OCI-LY7 (cell line): ENCODE measurements at regions of chr9 and their contacts with region 1.

Region 1: GRCh38 chr9:33659921-33660320 is 135.4 kb upstream of the PRSS3 start:
- DNase-seq: no peak
- H3K4me3 ChIP-seq: no peak overlapping the region
- H3K27ac ChIP-seq: no peak overlapping the region
- H3K4me1 ChIP-seq: no peaks in the 10 kb centered on the region
- CTCF ChIP-seq: no peak

Region 2: DNA sequence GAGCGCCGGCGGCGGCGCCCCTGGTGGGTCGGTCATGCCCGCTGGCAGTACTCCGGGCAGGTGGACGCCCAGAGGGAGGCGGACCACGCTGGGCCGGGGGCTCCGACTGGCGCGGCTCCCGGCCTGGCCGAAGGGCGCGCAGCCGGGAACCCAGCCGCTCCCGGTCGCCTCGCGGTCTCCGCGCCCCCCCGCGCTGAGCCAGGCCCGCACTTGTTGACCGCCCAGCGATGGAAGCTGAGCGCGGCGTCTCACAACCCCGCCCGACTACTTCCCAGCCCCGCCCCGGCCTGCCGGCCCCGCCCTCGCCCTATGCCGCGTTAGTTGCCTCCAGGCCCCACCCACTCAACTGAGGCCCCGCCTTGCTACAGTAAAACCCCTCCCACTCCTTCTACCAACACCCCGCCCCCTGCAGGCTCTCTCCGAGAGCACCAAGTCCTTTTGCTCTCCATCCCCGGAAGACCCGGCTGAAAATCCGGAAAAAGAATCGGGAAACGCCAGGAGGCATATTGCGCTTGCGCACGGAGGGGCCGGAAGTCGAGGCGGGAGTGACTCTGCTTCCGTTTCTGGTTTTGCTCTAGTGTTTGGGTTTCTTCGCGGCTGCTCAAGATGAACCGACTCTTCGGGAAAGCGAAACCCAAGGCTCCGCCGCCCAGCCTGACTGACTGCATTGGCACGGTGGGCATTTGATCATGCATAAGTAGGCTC is 395.3 kb before region 1 on chr9 and contains the starts of genes BAG1 and CHMP5:
- CTCF ChIA-PET with region 1: no interaction called
- POLR2A ChIA-PET with region 1: no interaction called
- intact Hi-C with region 1: no loop called
- DNase-seq: peak; percentile 99
- H3K4me3 ChIP-seq: peak within 1 kb of the TSS; percentile 77
- H3K27ac ChIP-seq: peak within 1 kb of the TSS; percentile 32
- H3K4me1 ChIP-seq: peaks cover 12% of the 10 kb centered on the region
- CTCF ChIP-seq: no peak
- total RNA-seq, gene BAG1: 48.1 and 68.3 TPM in 2 replicates
- total RNA-seq, gene CHMP5: 31.2 and 39.7 TPM in 2 replicates

Region 3: GRCh38 chr9:33366979-33367480 is 292.9 kb before region 1 on chr9:
- CTCF ChIA-PET with region 1: no interaction called
- POLR2A ChIA-PET with region 1: no interaction called
- intact Hi-C with region 1: no loop called
- DNase-seq: no peak
- H3K4me3 ChIP-seq: no peak overlapping the region
- H3K27ac ChIP-seq: no peak overlapping the region
- H3K4me1 ChIP-seq: no peaks in the 10 kb centered on the region
- CTCF ChIP-seq: no peak

Region 4: DNA sequence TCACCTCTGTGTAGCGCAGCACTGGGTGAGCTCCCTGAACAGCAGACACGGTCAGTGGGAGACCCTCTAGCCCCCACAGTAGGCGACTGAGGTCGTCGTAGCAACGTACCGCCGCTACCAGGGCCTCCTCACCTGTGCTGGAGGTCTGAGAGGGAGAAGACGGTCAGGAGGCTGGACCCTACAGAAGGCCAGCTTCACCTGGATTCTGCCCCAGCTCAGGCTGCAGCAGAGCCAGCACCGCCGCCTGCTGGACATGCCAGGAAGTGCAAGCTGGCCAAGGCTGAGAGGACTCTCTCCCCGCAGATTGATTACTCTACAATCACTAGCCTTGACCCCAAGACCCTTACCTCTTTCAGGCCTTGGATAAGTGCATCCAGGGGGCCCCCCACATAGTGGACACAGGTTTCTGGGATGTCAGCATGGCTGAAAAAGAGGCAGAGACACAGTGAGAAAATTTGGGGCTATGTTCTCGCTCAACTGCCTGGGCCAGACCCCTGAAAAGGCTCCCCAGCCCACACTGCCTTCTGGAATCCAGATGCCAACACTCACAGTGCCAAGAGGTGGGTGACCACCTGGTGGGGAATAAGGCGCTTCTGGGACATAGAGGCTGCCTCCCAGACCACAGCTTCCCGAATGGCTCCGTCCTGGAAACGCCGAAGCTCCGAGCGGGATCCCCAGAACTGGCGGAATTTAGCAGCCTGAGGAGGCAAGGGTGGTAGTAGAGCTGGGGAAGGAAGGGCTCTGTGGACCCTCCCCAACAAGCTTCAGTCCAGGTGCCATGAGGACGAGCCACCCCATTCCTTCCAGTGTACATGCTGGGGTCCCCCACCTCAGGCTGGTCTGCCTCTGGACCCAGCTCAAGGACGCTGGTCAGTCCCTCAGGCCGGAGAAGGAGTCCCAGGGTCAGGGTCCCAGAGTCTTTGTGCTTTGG is 193.1 kb before region 1 on chr9:
- CTCF ChIA-PET with region 1: no interaction called
- POLR2A ChIA-PET with region 1: no interaction called
- intact Hi-C with region 1: no loop called
- DNase-seq: peak; percentile 60
- H3K4me3 ChIP-seq: no peak overlapping the region
- H3K27ac ChIP-seq: no peak overlapping the region
- H3K4me1 ChIP-seq: peaks cover 1% of the 10 kb centered on the region
- CTCF ChIP-seq: peak; percentile 83

Region 5: DNA sequence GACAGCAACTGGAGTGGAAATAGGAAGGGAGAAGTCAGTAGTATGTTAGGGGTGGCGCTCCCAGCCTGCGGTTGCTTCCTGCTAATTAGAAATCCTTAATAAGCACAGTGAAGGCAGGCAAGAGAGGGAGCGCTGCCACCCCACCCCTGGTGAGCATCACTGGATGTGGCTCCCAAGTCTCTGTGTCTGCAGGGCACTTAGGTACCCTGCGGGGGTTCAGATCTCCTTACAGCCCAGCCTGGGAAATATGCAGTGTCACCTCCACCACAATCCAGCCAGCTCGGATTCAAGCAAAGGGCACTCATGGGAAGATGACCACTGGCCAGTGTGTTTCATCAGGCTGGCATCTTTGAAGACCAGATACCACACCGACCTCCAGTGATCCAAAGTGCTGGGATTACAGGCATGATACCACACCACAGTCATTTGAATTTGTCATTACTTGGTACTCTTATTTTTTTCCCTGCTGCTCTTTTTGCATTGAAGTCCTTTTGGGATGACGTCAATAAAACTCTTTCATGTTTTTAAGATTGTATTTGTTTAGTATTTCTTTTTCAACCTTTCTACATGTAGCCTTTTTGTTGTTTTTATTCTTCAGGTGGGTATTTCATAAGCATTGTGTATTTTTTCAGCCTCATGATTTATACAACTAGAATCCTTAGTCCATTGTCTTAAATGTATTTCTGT is 45.8 kb before region 1 on chr9:
- CTCF ChIA-PET with region 1: no interaction called
- POLR2A ChIA-PET with region 1: no interaction called
- intact Hi-C with region 1: loop called (anchors 10 kb)
- DNase-seq: no peak
- H3K4me3 ChIP-seq: no peak overlapping the region
- H3K27ac ChIP-seq: no peak overlapping the region
- H3K4me1 ChIP-seq: no peaks in the 10 kb centered on the region
- CTCF ChIP-seq: no peak

Region 6: DNA sequence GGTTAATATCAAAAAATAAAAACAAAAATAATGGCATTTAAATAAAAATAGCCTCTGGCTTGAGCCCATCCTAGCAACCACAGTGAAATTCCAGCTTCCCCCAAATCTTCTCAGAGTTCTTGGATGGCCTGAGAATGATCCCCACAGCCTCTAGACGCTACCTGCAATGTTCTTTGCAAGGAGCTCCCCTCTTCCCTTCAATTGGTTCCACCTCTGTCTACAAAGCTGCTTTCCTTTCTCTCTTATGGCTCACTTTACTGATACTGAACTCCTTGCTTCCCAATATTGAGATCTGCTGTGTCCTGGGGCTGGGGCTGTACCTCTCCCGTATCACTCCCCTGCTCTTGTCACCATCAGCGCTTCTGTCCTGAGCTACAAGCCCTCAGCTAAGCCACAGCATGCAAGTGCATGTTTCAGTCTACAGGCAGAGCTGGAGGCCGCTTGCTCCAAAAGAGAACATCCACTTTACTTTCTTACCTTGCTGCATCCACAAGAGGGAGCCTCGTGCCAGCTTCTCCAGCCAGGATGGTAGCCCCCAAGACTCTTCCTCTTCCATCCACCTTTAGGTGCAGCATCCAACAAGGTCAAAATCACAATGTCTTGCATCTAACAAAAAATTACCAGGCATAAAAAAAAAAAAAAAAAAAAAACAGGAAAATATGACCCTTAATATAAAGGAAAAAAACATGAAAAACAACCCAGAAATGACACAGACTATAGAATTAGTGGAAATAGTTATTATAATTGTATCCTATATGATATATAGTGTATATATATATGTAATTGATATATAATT is 78.1 kb after region 1 on chr9:
- CTCF ChIA-PET with region 1: no interaction called
- POLR2A ChIA-PET with region 1: no interaction called
- intact Hi-C with region 1: no loop called
- DNase-seq: peak; percentile 54
- H3K4me3 ChIP-seq: no peak overlapping the region
- H3K27ac ChIP-seq: no peak overlapping the region
- H3K4me1 ChIP-seq: no peaks in the 10 kb centered on the region
- CTCF ChIP-seq: peak; percentile 80